PC-3 (cell line): ENCODE measurements at regions of chr17 and their contacts with region 1.

Region 1: GRCh38 chr17:49076573-49077384 is 55.8 kb upstream of the B4GALNT2 start:
- DNase-seq: peak; percentile 97
- ATAC-seq: peak; percentile 99
- H3K4me3 ChIP-seq: peak overlapping the region; percentile 6; the same call in 1 of the 2 replicates
- H3K27ac ChIP-seq: peak overlapping the region; percentile 68
- H3K4me1 ChIP-seq: peaks cover 25% of the 10 kb centered on the region
- H3K27me3 ChIP-seq: no peaks in the 10 kb centered on the region
- CTCF ChIP-seq: no peak

Region 2: GRCh38 chr17:49146620-49147306 is 70.0 kb after region 1 on chr17:
- CTCF ChIA-PET with region 1: no interaction called
- POLR2A ChIA-PET with region 1: no interaction called
- intact Hi-C with region 1: no loop called
- DNase-seq: peak; percentile 99
- ATAC-seq: peak; percentile 99
- H3K4me3 ChIP-seq: no peak overlapping the region
- H3K27ac ChIP-seq: peak overlapping the region; percentile 42
- H3K4me1 ChIP-seq: peaks cover 16% of the 10 kb centered on the region
- H3K27me3 ChIP-seq: no peaks in the 10 kb centered on the region
- CTCF ChIP-seq: no peak

Region 3: DNA sequence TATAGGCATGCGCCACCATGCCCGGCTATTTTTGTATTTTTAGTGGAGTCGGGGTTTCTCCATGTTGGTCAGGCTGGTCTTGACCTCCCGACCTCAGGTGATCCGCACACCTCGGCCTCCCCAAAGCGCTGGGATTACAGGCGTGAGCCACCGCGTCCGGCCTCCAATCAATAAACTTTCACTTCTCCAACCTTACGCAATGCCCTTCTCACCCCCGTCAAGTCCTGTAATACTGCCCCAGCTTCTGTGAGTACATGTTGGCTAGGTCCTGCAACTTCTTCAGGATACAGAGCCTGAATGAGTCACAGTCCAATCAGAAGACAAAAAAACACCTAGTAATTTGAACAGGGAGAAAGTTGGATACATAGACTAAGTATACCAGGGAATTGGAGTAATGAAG is 200.9 kb after region 1 on chr17:
- CTCF ChIA-PET with region 1: no interaction called
- POLR2A ChIA-PET with region 1: interaction called, 10 read pairs
- intact Hi-C with region 1: no loop called
- DNase-seq: no peak
- ATAC-seq: peak; percentile 15; the same call in 1 of the 2 replicates
- H3K4me3 ChIP-seq: no peak overlapping the region
- H3K27ac ChIP-seq: no peak overlapping the region
- H3K4me1 ChIP-seq: no peaks in the 10 kb centered on the region
- H3K27me3 ChIP-seq: no peaks in the 10 kb centered on the region
- CTCF ChIP-seq: no peak